ENCODE measurements at regions of chr1 and their contacts with region 1.

Region 1: GRCh38 chr1:7975212-7975865 is 13.8 kb downstream of the PARK7 start:
- DNase-seq: peak in 1 of 2 experiments; percentile 90
- H3K4me3 ChIP-seq: no peak overlapping the region
- H3K27ac ChIP-seq: no peak overlapping the region
- H3K4me1 ChIP-seq: no peaks in the 10 kb centered on the region
- H3K27me3 ChIP-seq: no peaks in the 10 kb centered on the region
- CTCF ChIP-seq: peak; percentile 97 to 100 (median 100)
- EP300 ChIP-seq: no peak
- POLR2A ChIP-seq: no peak
- RAD21 ChIP-seq: peak; percentile 93

Region 2: DNA sequence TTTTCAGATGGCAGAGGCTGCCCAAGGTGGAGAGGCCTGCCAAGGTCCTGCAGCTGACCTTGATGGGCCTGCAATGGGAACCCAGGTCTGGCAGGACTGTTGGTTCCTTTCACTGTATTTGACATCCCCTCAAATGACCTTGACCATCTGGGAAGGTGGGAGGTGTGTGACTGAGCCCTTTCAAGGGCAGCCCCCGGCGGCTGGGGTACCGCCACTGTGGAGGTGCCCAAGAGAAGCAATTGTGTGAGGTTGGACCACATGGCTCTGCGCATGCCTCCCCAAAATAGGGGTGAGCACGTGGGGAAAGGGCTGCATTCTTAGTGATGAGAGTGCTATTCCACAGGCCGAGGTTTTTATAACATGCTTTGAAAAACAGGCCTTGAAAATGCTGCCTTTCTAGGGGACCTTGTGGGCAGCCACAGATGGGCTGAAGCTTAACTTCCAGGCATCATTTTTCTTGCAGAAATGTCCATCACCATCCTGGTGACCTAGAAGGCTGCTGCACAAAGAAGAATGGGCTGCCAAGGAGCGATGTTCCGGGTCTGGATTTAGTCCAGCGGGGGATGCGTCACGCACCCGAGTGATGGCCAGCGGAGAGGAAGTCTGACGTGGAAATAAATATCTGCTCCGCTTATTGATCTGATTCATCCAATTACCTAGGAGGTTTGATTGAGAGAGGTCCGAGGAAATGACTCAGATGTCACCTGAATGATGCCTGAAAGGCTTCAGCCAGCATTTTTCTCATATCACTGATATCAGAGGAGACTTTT is 106.0 kb before region 1 on chr1:
- CTCF ChIA-PET with region 1: no interaction called
- POLR2A ChIA-PET with region 1: no interaction called
- DNase-seq: no peak
- H3K4me3 ChIP-seq: no peak overlapping the region
- H3K27ac ChIP-seq: no peak overlapping the region
- H3K4me1 ChIP-seq: no peaks in the 10 kb centered on the region
- H3K27me3 ChIP-seq: no peaks in the 10 kb centered on the region
- CTCF ChIP-seq: no peak
- EP300 ChIP-seq: no peak
- POLR2A ChIP-seq: no peak
- RAD21 ChIP-seq: no peak

Region 3: GRCh38 chr1:7961216-7962015 is 13.9 kb before region 1 on chr1 and contains the start of gene PARK7:
- CTCF ChIA-PET with region 1: interaction called, 38 read pairs
- POLR2A ChIA-PET with region 1: interaction called, 7 read pairs
- DNase-seq: peak; percentile 96 to 99
- H3K4me3 ChIP-seq: peak within 1 kb of the TSS; percentile 82 to 92 (median 86)
- H3K27ac ChIP-seq: peak within 1 kb of the TSS; percentile 69; the same call in 1 of the 2 replicates
- H3K4me1 ChIP-seq: peaks cover 0 to 2% (median 0%) of the 10 kb centered on the region in 4 experiments; a peak in 1 of 7 replicates
- H3K27me3 ChIP-seq: no peaks in the 10 kb centered on the region
- CTCF ChIP-seq: peak; percentile 44 to 49 (median 46)
- EP300 ChIP-seq: peak in 1 of 2 experiments; percentile 100; a peak in 2 of 3 replicates
- POLR2A ChIP-seq: peak; percentile 89 to 90
- RAD21 ChIP-seq: peak; percentile 25 to 45; a peak in 3 of 4 replicates
- total RNA-seq, gene PARK7: 377 and 383 TPM in 2 replicates

Region 4: GRCh38 chr1:7991504-7992440 is 16.4 kb after region 1 on chr1:
- CTCF ChIA-PET with region 1: interaction called, 14 read pairs
- POLR2A ChIA-PET with region 1: interaction called, 4 read pairs
- DNase-seq: peak; percentile 80 to 90
- H3K4me3 ChIP-seq: no peak overlapping the region
- H3K27ac ChIP-seq: no peak overlapping the region
- H3K4me1 ChIP-seq: peaks cover 0 to 3% (median under 1%) of the 10 kb centered on the region in 4 experiments; a peak in 4 of 7 replicates
- H3K27me3 ChIP-seq: no peaks in the 10 kb centered on the region
- CTCF ChIP-seq: no peak
- EP300 ChIP-seq: no peak; a peak in 1 of 3 replicates
- POLR2A ChIP-seq: no peak
- RAD21 ChIP-seq: peak; percentile 5 to 33; a peak in 2 of 4 replicates

Region 5: GRCh38 chr1:8010080-8010664 is 34.8 kb after region 1 on chr1:
- CTCF ChIA-PET with region 1: interaction called, 56 read pairs
- POLR2A ChIA-PET with region 1: interaction called, 3 read pairs
- DNase-seq: no peak
- H3K4me3 ChIP-seq: no peak overlapping the region
- H3K27ac ChIP-seq: no peak overlapping the region
- H3K4me1 ChIP-seq: peaks cover 2 to 6% (median 3%) of the 10 kb centered on the region in 4 experiments; a peak in 5 of 7 replicates
- H3K27me3 ChIP-seq: no peaks in the 10 kb centered on the region
- CTCF ChIP-seq: no peak
- EP300 ChIP-seq: no peak
- POLR2A ChIP-seq: no peak
- RAD21 ChIP-seq: no peak

Region 6: GRCh38 chr1:8113262-8114220 is 138.2 kb after region 1 on chr1:
- CTCF ChIA-PET with region 1: no interaction called
- POLR2A ChIA-PET with region 1: no interaction called
- DNase-seq: no peak
- H3K4me3 ChIP-seq: no peak overlapping the region
- H3K27ac ChIP-seq: no peak overlapping the region
- H3K4me1 ChIP-seq: peaks cover 0 to 6% (median 1%) of the 10 kb centered on the region in 4 experiments; a peak in 2 of 7 replicates
- H3K27me3 ChIP-seq: no peaks in the 10 kb centered on the region
- CTCF ChIP-seq: no peak
- EP300 ChIP-seq: no peak
- POLR2A ChIP-seq: no peak
- RAD21 ChIP-seq: no peak

Region 7: GRCh38 chr1:8127171-8127641 is 151.9 kb after region 1 on chr1:
- CTCF ChIA-PET with region 1: no interaction called
- POLR2A ChIA-PET with region 1: no interaction called
- DNase-seq: no peak
- H3K4me3 ChIP-seq: no peak overlapping the region
- H3K27ac ChIP-seq: no peak overlapping the region
- H3K4me1 ChIP-seq: no peaks in the 10 kb centered on the region
- H3K27me3 ChIP-seq: no peaks in the 10 kb centered on the region
- CTCF ChIP-seq: no peak
- EP300 ChIP-seq: no peak
- POLR2A ChIP-seq: no peak
- RAD21 ChIP-seq: no peak

Region 8: DNA sequence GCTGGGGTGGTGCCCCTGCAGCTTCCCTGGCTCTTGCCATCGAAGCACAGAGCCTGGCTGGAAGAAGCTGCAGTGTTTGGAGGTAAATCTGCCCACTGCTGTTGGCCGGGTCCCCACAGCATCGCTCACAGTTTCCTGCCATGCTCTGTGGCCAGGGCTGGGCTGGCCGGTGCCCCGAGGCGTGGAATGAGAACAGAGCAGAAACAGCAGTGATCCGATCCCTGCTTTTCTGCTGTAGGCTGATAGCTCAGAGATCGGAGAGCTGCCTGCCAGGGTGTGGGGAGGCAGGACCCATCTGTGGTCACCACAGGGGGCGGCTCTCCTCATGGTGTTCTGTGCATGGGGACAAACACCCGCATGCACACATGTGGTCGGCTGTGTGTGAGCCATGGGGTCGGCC is 354.1 kb after region 1 on chr1:
- CTCF ChIA-PET with region 1: interaction called, 11 read pairs
- POLR2A ChIA-PET with region 1: no interaction called
- DNase-seq: no peak
- H3K4me3 ChIP-seq: no peak overlapping the region
- H3K27ac ChIP-seq: no peak overlapping the region
- H3K4me1 ChIP-seq: no peaks in the 10 kb centered on the region; a peak in 1 of 7 replicates
- H3K27me3 ChIP-seq: no peaks in the 10 kb centered on the region
- CTCF ChIP-seq: no peak
- EP300 ChIP-seq: no peak
- POLR2A ChIP-seq: no peak
- RAD21 ChIP-seq: no peak

Region 9: DNA sequence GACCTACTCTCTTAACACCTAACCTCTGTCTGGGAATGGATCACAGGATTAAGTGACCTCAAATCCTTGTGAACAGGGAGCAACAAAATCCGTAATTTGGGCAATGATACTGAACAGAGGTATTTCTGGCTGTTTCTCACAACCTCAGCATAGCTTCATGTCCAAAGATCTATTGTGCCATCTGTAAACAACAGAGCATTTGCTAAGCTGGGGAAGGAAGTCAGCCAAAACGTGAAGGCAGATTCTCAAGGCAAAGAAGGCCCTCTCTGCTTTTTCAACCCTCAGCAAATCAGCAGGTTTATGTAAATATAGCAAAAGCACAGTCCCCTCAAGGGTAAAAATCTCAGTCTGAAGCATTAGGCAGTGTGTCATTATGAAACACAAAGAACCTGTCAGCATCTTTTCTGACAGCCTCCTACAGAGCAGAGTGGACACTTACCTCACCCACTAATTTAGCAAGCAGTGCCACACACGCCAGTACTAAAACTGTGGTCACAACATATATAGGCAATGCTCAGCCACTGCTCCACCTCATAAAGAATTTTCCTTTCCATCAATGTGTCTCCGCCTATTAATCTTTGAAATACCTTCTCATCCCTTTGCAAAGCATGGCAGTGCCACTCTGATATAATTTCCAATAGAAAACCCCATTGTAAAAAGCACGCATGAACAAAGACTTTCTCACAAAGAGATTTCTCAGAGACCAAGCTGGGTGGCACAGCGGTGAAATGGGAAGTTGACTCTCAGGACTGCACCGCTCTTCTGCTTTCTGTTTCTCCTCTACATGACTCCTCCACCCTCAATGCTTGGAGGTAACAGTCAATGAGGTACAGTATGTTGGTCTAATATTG is 654.1 kb after region 1 on chr1:
- CTCF ChIA-PET with region 1: no interaction called
- POLR2A ChIA-PET with region 1: no interaction called
- DNase-seq: no peak
- H3K4me3 ChIP-seq: no peak overlapping the region
- H3K27ac ChIP-seq: no peak overlapping the region
- H3K4me1 ChIP-seq: peaks cover 0 to 22% (median 11%) of the 10 kb centered on the region in 4 experiments
- H3K27me3 ChIP-seq: no peaks in the 10 kb centered on the region
- CTCF ChIP-seq: no peak
- EP300 ChIP-seq: no peak
- POLR2A ChIP-seq: no peak
- RAD21 ChIP-seq: no peak